SK-N-SH (cell line): ENCODE measurements at regions of chr5 and their contacts with region 1.

Region 1: GRCh38 chr5:142548739-142549275 is 137.1 kb downstream of the FGF1 start:
- DNase-seq: peak; percentile 87
- H3K4me3 ChIP-seq: peak overlapping the region in 1 of 2 experiments; percentile 34; a peak in 1 of 4 replicates
- H3K27ac ChIP-seq: peak overlapping the region; percentile 59 to 60; a peak in 3 of 4 replicates
- H3K4me1 ChIP-seq: peaks cover 21 to 37% of the 10 kb centered on the region in 2 experiments
- H3K27me3 ChIP-seq: no peaks in the 10 kb centered on the region
- CTCF ChIP-seq: peak; percentile 98
- EP300 ChIP-seq: no peak
- RAD21 ChIP-seq: peak; percentile 95

Region 2: GRCh38 chr5:142145106-142145900 is 403.5 kb before region 1 on chr5:
- CTCF ChIA-PET with region 1: interaction called, 38 read pairs
- POLR2A ChIA-PET with region 1: no interaction called
- DNase-seq: peak; percentile 57
- H3K4me3 ChIP-seq: no peak overlapping the region; a peak in 1 of 4 replicates
- H3K27ac ChIP-seq: no peak overlapping the region
- H3K4me1 ChIP-seq: peaks cover 0 to 4% of the 10 kb centered on the region in 2 experiments; a peak in 2 of 4 replicates
- H3K27me3 ChIP-seq: no peaks in the 10 kb centered on the region
- CTCF ChIP-seq: peak; percentile 86
- EP300 ChIP-seq: no peak
- RAD21 ChIP-seq: peak; percentile 71

Region 3: GRCh38 chr5:142167458-142167857 is 381.3 kb before region 1 on chr5:
- CTCF ChIA-PET with region 1: interaction called, 30 read pairs
- POLR2A ChIA-PET with region 1: no interaction called
- DNase-seq: no peak
- H3K4me3 ChIP-seq: no peak overlapping the region
- H3K27ac ChIP-seq: peak overlapping the region in 1 of 2 experiments; percentile 99; a peak in 2 of 4 replicates
- H3K4me1 ChIP-seq: peaks cover 5 to 48% of the 10 kb centered on the region in 2 experiments
- H3K27me3 ChIP-seq: no peaks in the 10 kb centered on the region
- CTCF ChIP-seq: peak; percentile 24; the same call in 1 of the 2 replicates
- EP300 ChIP-seq: no peak
- RAD21 ChIP-seq: peak; percentile 48

Region 4: GRCh38 chr5:142287096-142287972 is 261.5 kb before region 1 on chr5:
- CTCF ChIA-PET with region 1: interaction called, 11 read pairs
- POLR2A ChIA-PET with region 1: interaction called, 3 read pairs
- DNase-seq: no peak
- H3K4me3 ChIP-seq: no peak overlapping the region
- H3K27ac ChIP-seq: peak overlapping the region in 1 of 2 experiments; percentile 54; a peak in 1 of 4 replicates
- H3K4me1 ChIP-seq: peaks cover 11 to 31% of the 10 kb centered on the region in 2 experiments; a peak in 3 of 4 replicates
- H3K27me3 ChIP-seq: no peaks in the 10 kb centered on the region
- CTCF ChIP-seq: no peak
- EP300 ChIP-seq: no peak
- RAD21 ChIP-seq: no peak

Region 5: GRCh38 chr5:142324871-142325724 is 223.7 kb before region 1 on chr5 and contains the start of gene SPRY4:
- CTCF ChIA-PET with region 1: interaction called, 117 read pairs
- POLR2A ChIA-PET with region 1: interaction called, 27 read pairs
- DNase-seq: peak; percentile 95
- H3K4me3 ChIP-seq: peak within 1 kb of the TSS; percentile 93 to 95
- H3K27ac ChIP-seq: peak within 1 kb of the TSS; percentile 98
- H3K4me1 ChIP-seq: peaks cover 31 to 50% of the 10 kb centered on the region in 2 experiments
- H3K27me3 ChIP-seq: no peaks in the 10 kb centered on the region
- CTCF ChIP-seq: 0 out of 2 replicates have a peak, but pooled peaks have one; percentile 5
- EP300 ChIP-seq: peak; percentile 36 to 51; a peak in 2 of 4 replicates
- RAD21 ChIP-seq: peak; percentile 39
- polyA plus RNA-seq, gene SPRY4: 12.2 and 18.0 TPM in 2 replicates

Region 6: GRCh38 chr5:142587354-142587965 is 38.7 kb after region 1 on chr5:
- CTCF ChIA-PET with region 1: interaction called, 10 read pairs
- POLR2A ChIA-PET with region 1: no interaction called
- DNase-seq: no peak
- H3K4me3 ChIP-seq: no peak overlapping the region
- H3K27ac ChIP-seq: no peak overlapping the region
- H3K4me1 ChIP-seq: peaks cover 2 to 6% of the 10 kb centered on the region in 2 experiments; a peak in 2 of 4 replicates
- H3K27me3 ChIP-seq: no peaks in the 10 kb centered on the region
- CTCF ChIP-seq: peak; percentile 61
- EP300 ChIP-seq: no peak
- RAD21 ChIP-seq: peak; percentile 50